ENCODE measurements at regions of chr9 and their contacts with region 1.

Region 1: GRCh38 chr9:32426278-32426939 is 42.0 kb downstream of the ACO1 start:
- DNase-seq: peak; percentile 56 to 76
- H3K4me3 ChIP-seq: no peak overlapping the region
- H3K4me3 Mint-ChIP-seq: no peak overlapping the region
- H3K27ac Mint-ChIP-seq: peak overlapping the region; percentile 59
- H3K4me1 ChIP-seq: peaks cover 24% of the 10 kb centered on the region
- H3K4me1 Mint-ChIP-seq: no peaks in the 10 kb centered on the region
- H3K27me3 ChIP-seq: no peaks in the 10 kb centered on the region
- H3K27me3 Mint-ChIP-seq: no peaks in the 10 kb centered on the region
- CTCF ChIP-seq: no peak

Region 2: DNA sequence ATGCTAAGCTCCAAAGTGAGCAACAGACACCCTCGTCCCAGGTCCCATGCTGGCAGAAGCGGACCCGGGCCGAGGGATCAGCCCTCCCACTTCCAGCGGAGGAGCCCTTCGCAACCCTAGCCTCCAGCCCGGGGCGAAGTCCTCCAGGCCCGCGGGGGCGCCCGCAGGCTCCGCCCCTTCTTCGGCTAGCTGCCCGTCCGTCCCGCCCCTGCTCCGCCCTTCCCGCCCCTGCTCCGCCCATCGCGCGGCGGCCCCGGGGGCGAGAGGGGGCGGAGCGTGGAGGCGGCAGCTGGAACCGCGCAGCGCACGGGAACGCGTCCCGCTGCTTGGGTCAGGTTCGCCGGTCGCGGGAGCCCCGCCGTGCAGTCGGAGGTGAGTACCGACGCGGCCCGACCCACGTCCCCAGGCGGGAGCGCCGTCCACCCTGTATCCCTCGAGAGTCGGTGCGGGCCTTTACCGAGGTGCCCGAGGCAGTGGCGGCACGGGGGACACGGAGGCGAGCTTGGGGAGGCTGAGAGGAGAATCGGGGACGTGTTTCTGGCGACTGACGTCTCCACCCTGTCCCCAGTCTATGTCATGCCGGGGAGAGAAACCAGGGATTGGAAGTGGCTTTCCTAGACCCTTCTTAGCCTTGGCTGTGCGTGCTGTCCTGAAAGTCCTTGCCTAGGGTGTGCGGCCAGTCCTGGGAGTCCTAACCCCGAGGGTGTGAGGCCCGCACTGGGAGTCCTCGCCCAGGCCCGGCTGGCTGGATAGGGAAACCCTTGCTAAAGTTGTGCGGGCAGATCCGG is 41.9 kb before region 1 on chr9 and contains the start of gene ACO1:
- CTCF ChIA-PET with region 1: interaction called, 48 read pairs
- POLR2A ChIA-PET with region 1: interaction called, 5 read pairs
- intact Hi-C with region 1: loop called (anchors 1 kb)
- DNase-seq: peak; percentile 92 to 96
- H3K4me3 ChIP-seq: peak within 1 kb of the TSS; percentile 76
- H3K4me3 Mint-ChIP-seq: peak within 1 kb of the TSS; percentile 83
- H3K27ac Mint-ChIP-seq: peak within 1 kb of the TSS; percentile 51
- H3K4me1 ChIP-seq: 0 out of 2 replicates have a peak, but pooled peaks cover 4% of the 10 kb centered on the region
- H3K4me1 Mint-ChIP-seq: peaks cover 13% of the 10 kb centered on the region
- H3K27me3 ChIP-seq: no peaks in the 10 kb centered on the region
- H3K27me3 Mint-ChIP-seq: peaks cover 8% of the 10 kb centered on the region
- CTCF ChIP-seq: no peak
- total RNA-seq, gene ACO1: 51.1 and 54.7 TPM in 2 replicates

Region 3: DNA sequence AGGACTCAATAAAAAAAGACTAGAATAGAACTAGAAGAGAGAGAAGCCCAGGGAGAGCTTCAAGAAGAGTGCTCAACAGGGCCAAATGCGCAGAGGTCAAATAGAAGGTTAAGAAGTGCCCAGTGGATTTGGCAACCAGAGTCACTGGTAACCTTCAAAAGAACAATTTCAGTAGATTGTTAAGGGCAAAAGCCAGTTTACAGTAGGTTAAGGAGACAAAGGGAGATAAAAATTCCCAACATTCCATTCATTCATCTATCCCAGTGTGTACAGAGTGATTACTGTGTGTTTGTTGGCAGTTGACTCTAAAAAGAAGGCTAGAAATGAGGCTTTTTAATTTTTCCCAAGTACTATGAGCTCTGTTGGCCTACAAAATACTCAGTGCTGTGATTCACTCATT is 30.2 kb after region 1 on chr9:
- CTCF ChIA-PET with region 1: no interaction called
- POLR2A ChIA-PET with region 1: no interaction called
- intact Hi-C with region 1: loop called (anchors 2 kb)
- DNase-seq: peak in 1 of 2 experiments; percentile 41
- H3K4me3 ChIP-seq: no peak overlapping the region
- H3K4me3 Mint-ChIP-seq: peak overlapping the region; percentile 54
- H3K27ac Mint-ChIP-seq: peak overlapping the region; percentile 82
- H3K4me1 ChIP-seq: peaks cover 26% of the 10 kb centered on the region
- H3K4me1 Mint-ChIP-seq: peaks cover 20% of the 10 kb centered on the region
- H3K27me3 ChIP-seq: no peaks in the 10 kb centered on the region
- H3K27me3 Mint-ChIP-seq: no peaks in the 10 kb centered on the region
- CTCF ChIP-seq: no peak

Region 4: DNA sequence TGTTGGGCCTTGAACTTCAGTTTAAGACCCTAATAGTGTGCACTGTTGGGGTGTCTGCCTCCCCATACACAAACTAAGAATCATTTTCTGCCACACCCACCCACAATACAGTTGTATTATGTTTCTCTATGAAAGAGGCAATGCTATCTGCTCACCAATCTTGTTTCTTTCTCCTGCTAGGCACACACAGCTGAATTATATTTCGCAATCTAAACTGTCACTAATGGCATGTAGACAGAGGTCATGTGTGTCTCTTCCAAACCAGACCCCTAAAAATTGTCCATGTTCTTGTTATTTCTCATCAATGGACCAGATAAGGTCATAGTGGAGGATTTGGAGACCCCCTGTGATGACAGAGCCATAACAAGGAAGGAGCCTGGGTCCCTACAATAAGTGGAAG is 42.3 kb after region 1 on chr9:
- CTCF ChIA-PET with region 1: no interaction called
- POLR2A ChIA-PET with region 1: no interaction called
- intact Hi-C with region 1: no loop called
- DNase-seq: no peak
- H3K4me3 ChIP-seq: no peak overlapping the region
- H3K4me3 Mint-ChIP-seq: no peak overlapping the region
- H3K27ac Mint-ChIP-seq: no peak overlapping the region
- H3K4me1 ChIP-seq: no peaks in the 10 kb centered on the region
- H3K4me1 Mint-ChIP-seq: no peaks in the 10 kb centered on the region
- H3K27me3 ChIP-seq: no peaks in the 10 kb centered on the region
- H3K27me3 Mint-ChIP-seq: no peaks in the 10 kb centered on the region
- CTCF ChIP-seq: no peak